Activated CD8-positive, alpha-beta T cell treated with anti-CD3 and anti-CD28 coated beads for 36 hours (primary cell): ENCODE measurements at regions of chr1 and their contacts with region 1.

Region 1: GRCh38 chr1:39189592-39190041 is 14.9 kb upstream of the MACF1 start:
- DNase-seq: no peak
- ATAC-seq: no peak
- H3K4me3 Mint-ChIP-seq: no peak overlapping the region
- H3K27ac Mint-ChIP-seq: peak overlapping the region; percentile 89
- H3K4me1 Mint-ChIP-seq: peaks cover 77% of the 10 kb centered on the region
- H3K27me3 Mint-ChIP-seq: no peaks in the 10 kb centered on the region
- CTCF ChIP-seq: no peak

Region 2: GRCh38 chr1:39061951-39062350 is 127.7 kb before region 1 on chr1:
- CTCF ChIA-PET with region 1: no interaction called
- POLR2A ChIA-PET with region 1: no interaction called
- intact Hi-C with region 1: no loop called
- DNase-seq: no peak
- ATAC-seq: no peak
- H3K4me3 Mint-ChIP-seq: no peak overlapping the region
- H3K27ac Mint-ChIP-seq: no peak overlapping the region
- H3K4me1 Mint-ChIP-seq: no peaks in the 10 kb centered on the region
- H3K27me3 Mint-ChIP-seq: no peaks in the 10 kb centered on the region
- CTCF ChIP-seq: no peak

Region 3: DNA sequence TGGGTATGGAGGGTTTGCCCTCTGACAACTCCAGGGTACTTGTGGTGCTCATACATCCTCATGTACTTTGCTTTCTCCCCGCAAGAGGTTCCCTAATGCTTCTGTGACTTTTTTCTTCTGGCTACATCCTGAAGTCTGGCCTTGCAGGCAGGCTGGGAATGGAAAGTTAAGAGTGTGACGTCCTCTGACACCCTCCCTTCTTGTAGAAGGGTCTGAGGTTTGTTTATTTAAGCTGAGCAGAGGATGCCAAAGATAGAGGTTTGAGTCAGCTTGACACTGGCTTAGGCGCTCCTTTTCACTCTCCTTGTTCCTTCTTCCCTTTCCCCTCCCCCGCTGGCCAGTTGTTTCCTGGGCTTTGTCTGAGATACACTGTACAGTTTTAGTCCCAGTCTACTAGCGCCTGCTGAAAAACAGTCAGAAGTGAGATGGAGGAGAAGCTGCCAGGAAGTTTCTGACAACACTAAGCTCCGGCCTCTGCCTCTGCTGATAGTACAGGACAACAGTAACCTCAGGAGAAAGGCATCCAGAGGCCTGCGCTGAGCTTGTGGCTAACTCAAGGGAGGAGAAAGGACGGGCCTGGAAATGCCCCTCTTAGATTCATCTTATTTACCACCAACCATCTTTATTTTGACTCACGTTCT is 14.9 kb after region 1 on chr1 and contains the start of gene MACF1:
- CTCF ChIA-PET with region 1: interaction called, 150 read pairs
- POLR2A ChIA-PET with region 1: interaction called, 81 read pairs
- intact Hi-C with region 1: no loop called
- DNase-seq: peak; percentile 65
- ATAC-seq: peak; percentile 48
- H3K4me3 Mint-ChIP-seq: peak within 1 kb of the TSS; percentile 84
- H3K27ac Mint-ChIP-seq: peak within 1 kb of the TSS; percentile 95
- H3K4me1 Mint-ChIP-seq: peaks cover 42% of the 10 kb centered on the region
- H3K27me3 Mint-ChIP-seq: no peaks in the 10 kb centered on the region
- CTCF ChIP-seq: no peak
- total RNA-seq, gene MACF1: 201 to 215 TPM